Common myeloid progenitor, CD34-positive (primary cell): ENCODE measurements at regions of chr6 and their contacts with region 1.

Region 1: DNA sequence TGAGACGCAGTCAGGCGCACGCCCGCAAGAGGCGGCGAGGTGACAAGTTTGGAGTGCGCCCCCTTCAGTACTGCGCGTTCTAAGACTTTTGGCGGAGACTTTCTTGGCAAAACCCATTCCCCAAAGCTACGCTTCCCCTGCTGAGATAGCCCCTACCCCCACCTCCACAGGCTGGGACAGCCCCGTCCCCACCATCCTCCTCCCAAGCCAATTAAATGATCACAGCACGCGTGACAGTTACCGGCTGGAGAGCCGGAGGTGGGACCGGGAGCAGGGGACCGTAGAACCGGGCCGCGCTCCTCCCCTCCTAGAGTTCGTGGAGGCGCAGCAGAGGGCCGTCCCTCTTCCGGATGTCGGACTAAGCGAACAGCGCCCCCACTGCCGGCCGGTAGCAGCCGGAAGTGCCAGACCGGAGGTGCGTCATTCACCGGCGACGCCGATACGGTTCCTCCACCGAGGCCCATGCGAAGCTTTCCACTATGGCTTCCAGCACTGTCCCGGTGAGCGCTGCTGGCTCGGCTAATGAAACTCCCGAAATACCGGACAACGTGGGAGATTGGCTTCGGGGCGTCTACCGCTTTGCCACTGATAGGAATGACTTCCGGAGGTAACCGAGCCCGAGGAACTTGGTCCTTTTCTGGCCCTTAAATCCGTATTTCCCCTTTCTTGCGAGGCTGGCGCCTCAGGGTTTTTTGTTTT is at the start of gene TOMM6:
- DNase-seq: peak; percentile 96 to 97 (median 97)
- H3K4me3 ChIP-seq: peak within 1 kb of the TSS; percentile 92 to 100 (median 97)
- H3K27ac ChIP-seq: peak within 1 kb of the TSS; percentile 93 to 99
- H3K4me1 ChIP-seq: peaks cover 0 to 38% (median 20%) of the 10 kb centered on the region in 4 experiments
- H3K27me3 ChIP-seq: no peaks in the 10 kb centered on the region

Region 2: DNA sequence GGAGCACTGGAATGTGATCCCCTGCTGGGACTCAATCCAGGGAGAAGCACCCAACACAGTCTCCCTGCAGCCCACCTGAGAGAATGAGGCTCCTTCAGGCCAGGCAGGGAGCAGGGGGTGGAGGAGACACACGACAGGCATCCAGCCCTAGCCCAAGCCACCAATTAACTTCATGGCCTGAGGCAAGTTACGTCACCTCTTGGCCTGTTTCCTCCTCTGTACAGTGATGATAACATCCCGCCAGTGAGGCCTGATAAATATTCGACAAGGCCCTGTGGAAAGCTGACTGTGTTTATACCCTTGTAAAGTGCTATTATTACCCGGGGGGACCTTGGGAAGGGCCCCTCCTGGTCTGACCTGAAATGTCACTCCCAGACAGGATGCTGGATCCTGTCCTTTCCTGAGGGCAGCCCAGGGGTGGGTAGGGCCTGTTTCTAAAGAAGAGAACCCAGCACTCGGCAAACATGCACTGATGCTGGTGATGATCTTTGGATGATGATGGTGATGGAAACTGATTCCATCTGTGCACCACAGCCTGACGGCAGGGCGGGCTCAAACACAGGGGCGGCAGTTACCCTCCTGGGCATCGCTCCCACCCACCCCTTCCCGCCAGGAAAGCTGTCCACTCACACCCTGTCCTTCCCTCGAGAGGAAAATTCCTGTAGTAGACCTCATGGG is 20.1 kb before region 1 on chr6:
- CTCF ChIA-PET with region 1: interaction called, 12 read pairs
- POLR2A ChIA-PET with region 1: interaction called, 7 read pairs
- DNase-seq: peak; percentile 86 to 93 (median 89)
- H3K4me3 ChIP-seq: peak overlapping the region in 1 of 7 experiments; percentile 8
- H3K27ac ChIP-seq: peak overlapping the region; percentile 78 to 82
- H3K4me1 ChIP-seq: peaks cover 6 to 46% (median 36%) of the 10 kb centered on the region in 4 experiments
- H3K27me3 ChIP-seq: no peaks in the 10 kb centered on the region

Region 3: GRCh38 chr6:41775293-41776181 is 11.8 kb before region 1 on chr6:
- CTCF ChIA-PET with region 1: interaction called, 19 read pairs
- POLR2A ChIA-PET with region 1: no interaction called
- DNase-seq: peak; percentile 78 to 88 (median 86)
- H3K4me3 ChIP-seq: no peak overlapping the region
- H3K27ac ChIP-seq: no peak overlapping the region
- H3K4me1 ChIP-seq: peaks cover 17 to 32% (median 31%) of the 10 kb centered on the region in 4 experiments
- H3K27me3 ChIP-seq: no peaks in the 10 kb centered on the region

Region 4: DNA sequence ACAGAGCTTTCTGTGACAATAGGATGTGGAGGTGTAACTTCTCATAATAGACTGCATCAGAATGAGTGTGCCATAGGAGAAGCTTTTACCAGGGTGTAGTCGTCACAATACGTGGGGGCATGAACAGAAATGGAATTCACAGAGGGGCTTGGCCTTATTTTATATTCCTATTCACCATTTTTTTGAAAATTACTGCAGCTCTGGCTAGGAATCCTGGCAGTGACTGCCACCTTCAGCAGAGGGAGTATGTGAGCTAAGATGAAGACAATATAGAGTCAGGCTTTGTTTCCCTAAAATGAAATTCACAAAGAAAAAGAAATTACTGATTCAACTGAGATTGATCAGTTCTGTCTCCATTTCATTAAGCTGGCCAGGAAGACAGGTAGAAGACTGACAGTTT is 14.0 kb after region 1 on chr6:
- CTCF ChIA-PET with region 1: interaction called, 20 read pairs
- POLR2A ChIA-PET with region 1: no interaction called
- DNase-seq: peak in 2 of 3 donors; percentile 37 to 41
- H3K4me3 ChIP-seq: no peak overlapping the region
- H3K27ac ChIP-seq: no peak overlapping the region
- H3K4me1 ChIP-seq: no peaks in the 10 kb centered on the region
- H3K27me3 ChIP-seq: no peaks in the 10 kb centered on the region

Region 5: DNA sequence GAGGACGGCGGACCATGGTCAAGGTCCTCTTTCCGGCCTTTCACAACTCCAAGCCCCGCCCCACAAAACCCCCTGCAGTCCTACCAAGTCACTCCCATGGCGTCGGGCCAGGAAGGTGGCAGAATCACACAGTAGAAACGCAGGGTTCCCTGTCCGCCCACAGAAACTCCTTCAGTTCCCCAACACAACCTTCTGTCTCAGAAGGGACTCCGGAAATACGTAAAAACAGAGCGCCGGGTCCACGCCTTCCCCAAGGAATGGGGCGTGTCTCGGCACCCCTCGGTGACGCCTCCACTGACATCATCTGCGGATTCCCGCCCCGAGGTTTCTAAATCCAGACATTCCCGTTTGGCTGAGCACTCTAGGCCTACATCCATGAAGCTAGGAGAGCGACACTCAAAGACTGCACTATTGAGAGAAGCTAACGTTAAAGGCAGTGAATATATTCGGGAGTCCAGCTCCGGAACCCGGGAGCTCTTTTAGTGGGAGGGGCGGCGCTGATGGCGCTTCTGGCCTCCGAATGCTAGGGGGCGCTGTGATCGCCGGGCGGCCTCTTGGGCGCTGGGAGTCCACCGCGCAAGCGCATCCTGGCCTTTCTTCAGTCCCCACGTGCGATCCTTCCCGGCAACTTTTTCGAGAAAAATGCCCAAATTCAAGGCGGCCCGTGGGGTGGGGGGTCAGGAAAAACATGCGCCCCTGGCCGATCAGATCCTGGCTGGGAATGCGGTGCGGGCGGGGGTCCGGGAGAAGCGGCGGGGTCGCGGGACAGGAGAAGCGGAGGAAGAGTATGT is 133.7 kb after region 1 on chr6 and contains the starts of genes BYSL and MED20:
- CTCF ChIA-PET with region 1: interaction called, 10 read pairs
- POLR2A ChIA-PET with region 1: interaction called, 3 read pairs
- DNase-seq: peak; percentile 97 to 98 (median 98)
- H3K4me3 ChIP-seq: peak within 1 kb of the TSS; percentile 87 to 100 (median 99)
- H3K27ac ChIP-seq: peak within 1 kb of the TSS; percentile 96 to 97
- H3K4me1 ChIP-seq: peaks cover 20 to 38% (median 27%) of the 10 kb centered on the region in 4 experiments
- H3K27me3 ChIP-seq: no peaks in the 10 kb centered on the region

Region 6: DNA sequence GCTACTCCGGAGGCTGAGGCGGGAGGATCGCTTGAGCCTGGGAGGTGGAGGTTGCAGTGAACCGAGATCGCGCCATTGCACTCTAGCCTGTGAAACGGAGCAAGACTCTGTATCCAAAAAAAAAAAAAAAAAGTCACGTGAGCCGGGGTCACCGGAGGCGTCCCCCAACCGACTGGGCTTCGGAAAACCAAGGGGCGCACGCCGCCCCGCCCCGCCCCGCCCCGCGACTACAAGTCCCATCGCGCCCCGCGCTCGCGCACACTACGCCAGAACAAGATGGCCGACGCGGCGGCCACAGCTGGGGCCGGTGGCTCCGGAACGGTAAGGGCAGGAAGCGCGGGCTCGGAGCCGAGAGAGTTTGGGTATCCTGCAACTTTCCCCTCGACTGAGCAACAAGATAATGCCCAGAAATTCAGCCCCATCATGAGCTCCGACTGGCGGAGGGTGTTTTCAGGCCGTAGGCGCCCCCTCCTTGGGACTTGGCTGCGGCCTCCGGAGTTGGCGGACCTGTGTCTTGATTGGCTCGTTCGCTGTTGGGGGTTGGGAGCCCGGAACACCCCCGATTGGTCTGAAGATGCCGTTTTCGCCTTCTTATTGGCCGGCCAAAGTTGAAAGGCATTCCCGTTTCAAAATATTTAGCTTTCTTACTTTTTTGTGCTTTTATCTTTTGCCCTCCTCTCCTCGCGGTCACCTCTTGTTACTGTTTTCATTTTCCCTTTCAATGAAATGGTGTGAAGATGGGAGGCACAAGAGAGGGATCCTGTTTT is 263.1 kb after region 1 on chr6 and contains the start of gene TAF8:
- CTCF ChIA-PET with region 1: interaction called, 43 read pairs
- POLR2A ChIA-PET with region 1: interaction called, 5 read pairs
- DNase-seq: peak; percentile 93 to 96 (median 95)
- H3K4me3 ChIP-seq: peak within 1 kb of the TSS; percentile 62 to 98 (median 94)
- H3K27ac ChIP-seq: peak within 1 kb of the TSS; percentile 72 to 91
- H3K4me1 ChIP-seq: peaks cover 24 to 61% (median 53%) of the 10 kb centered on the region in 4 experiments
- H3K27me3 ChIP-seq: no peaks in the 10 kb centered on the region